Activated naive CD4-positive, alpha-beta T cell treated with anti-CD3 and anti-CD28 coated beads for 36 hours (primary cell): ENCODE measurements at regions of chr5 and their contacts with region 1.

Region 1: DNA sequence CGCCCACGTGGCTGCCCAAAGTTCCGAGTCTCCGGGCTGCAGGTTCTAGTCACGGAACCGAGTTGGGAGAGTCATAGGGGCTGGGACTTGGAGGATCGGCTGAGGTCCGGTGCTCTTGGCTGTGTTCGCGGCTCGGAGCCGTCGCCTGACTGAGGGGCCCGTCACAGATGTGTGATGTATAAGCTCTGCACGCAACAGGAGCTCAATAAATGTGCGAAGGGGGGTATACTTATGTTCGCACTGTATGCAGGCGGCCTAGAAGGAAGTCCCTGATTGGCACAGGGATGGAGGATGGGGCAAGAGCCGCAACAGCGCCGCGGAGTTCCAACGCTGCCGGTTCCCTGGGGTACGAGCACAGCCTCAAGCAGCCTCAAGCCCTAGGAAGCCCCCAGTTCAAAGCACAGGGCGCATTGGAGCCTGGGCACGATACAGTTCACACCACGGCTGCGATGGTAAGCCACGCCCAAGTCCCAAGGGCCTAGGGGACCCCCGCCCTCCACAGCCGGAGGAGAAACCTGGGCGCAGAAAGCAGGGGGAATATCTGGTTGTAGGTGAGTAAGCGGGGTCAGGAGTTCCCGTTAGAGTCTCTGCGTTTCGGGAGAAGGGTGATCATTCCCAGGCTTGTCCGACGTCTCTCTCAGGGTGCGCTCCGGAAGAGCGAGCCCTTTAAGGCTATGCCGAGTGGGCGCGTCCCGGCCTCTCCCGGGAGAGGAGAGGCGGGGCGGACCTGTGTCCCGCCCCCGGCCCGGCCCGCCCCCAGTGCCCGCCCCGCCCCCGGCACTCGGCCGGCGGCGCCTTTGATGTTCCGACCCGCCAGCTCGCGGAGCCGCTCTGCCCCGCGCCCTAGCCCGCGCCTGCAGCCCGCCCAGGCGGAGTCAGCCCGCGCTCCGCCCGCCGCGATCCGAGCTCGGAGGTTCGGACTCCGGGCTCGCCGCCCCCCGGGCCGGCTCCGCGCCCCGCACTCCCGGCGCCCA is at the start of gene TCF7:
- DNase-seq: peak; percentile 81
- H3K4me3 Mint-ChIP-seq: peak within 1 kb of the TSS; percentile 81
- H3K27ac Mint-ChIP-seq: peak within 1 kb of the TSS; percentile 91
- H3K4me1 Mint-ChIP-seq: peaks cover 64% of the 10 kb centered on the region
- H3K27me3 Mint-ChIP-seq: no peaks in the 10 kb centered on the region
- total RNA-seq, gene TCF7: 87.9 to 92.3 TPM

Region 2: GRCh38 chr5:132419502-132420468 is 1694.4 kb before region 1 on chr5:
- CTCF ChIA-PET with region 1: no interaction called
- intact Hi-C with region 1: loop called (anchors 10 kb)
- DNase-seq: peak; percentile 67
- H3K4me3 Mint-ChIP-seq: peak overlapping the region; percentile 14
- H3K27ac Mint-ChIP-seq: peak overlapping the region; percentile 86
- H3K4me1 Mint-ChIP-seq: peaks cover 87% of the 10 kb centered on the region
- H3K27me3 Mint-ChIP-seq: no peaks in the 10 kb centered on the region

Region 3: GRCh38 chr5:134086943-134087305 is 27.3 kb before region 1 on chr5:
- CTCF ChIA-PET with region 1: interaction called, 8 read pairs
- intact Hi-C with region 1: loop called (anchors 1 kb)
- DNase-seq: peak; percentile 85
- H3K4me3 Mint-ChIP-seq: peak overlapping the region; percentile 59
- H3K27ac Mint-ChIP-seq: peak overlapping the region; percentile 86
- H3K4me1 Mint-ChIP-seq: peaks cover 82% of the 10 kb centered on the region
- H3K27me3 Mint-ChIP-seq: no peaks in the 10 kb centered on the region

Region 4: GRCh38 chr5:134132372-134133034 is 18.3 kb after region 1 on chr5:
- CTCF ChIA-PET with region 1: interaction called, 437 read pairs
- intact Hi-C with region 1: loop called (anchors 1 kb)
- DNase-seq: peak; percentile 93
- H3K4me3 Mint-ChIP-seq: peak overlapping the region; percentile 36
- H3K27ac Mint-ChIP-seq: peak overlapping the region; percentile 90
- H3K4me1 Mint-ChIP-seq: peaks cover 99% of the 10 kb centered on the region
- H3K27me3 Mint-ChIP-seq: no peaks in the 10 kb centered on the region

Region 5: GRCh38 chr5:134145779-134146581 is 31.8 kb after region 1 on chr5:
- CTCF ChIA-PET with region 1: interaction called, 437 read pairs
- intact Hi-C with region 1: no loop called
- DNase-seq: peak; percentile 93
- H3K4me3 Mint-ChIP-seq: no peak overlapping the region
- H3K27ac Mint-ChIP-seq: peak overlapping the region; percentile 79
- H3K4me1 Mint-ChIP-seq: peaks cover 42% of the 10 kb centered on the region
- H3K27me3 Mint-ChIP-seq: no peaks in the 10 kb centered on the region

Region 6: GRCh38 chr5:134541736-134542376 is 427.7 kb after region 1 on chr5:
- CTCF ChIA-PET with region 1: no interaction called
- intact Hi-C with region 1: loop called (anchors 5 kb)
- DNase-seq: peak; percentile 57
- H3K4me3 Mint-ChIP-seq: no peak overlapping the region
- H3K27ac Mint-ChIP-seq: no peak overlapping the region
- H3K4me1 Mint-ChIP-seq: peaks cover 67% of the 10 kb centered on the region
- H3K27me3 Mint-ChIP-seq: no peaks in the 10 kb centered on the region